Activated T-helper 2 cell treated with anti-CD3 and anti-CD28 coated beads, Interferon-gamma antibody, Interleukin-2, Interleukin-4, amounts not matched to agents 10 μg/mL and 5 μg/mL and 100 μg/mL, durations not matched to agents 14 hours and 24 hours and 36 hours (primary cell): ENCODE measurements at regions of chr2 and their contacts with region 1.

Region 1: GRCh38 chr2:55419679-55420438 is at the start of gene CCDC88A:
- DNase-seq: peak; percentile 86
- H3K4me3 Mint-ChIP-seq: peak within 1 kb of the TSS; percentile 91
- H3K27ac Mint-ChIP-seq: peak within 1 kb of the TSS; percentile 69
- H3K4me1 Mint-ChIP-seq: peaks cover 27% of the 10 kb centered on the region
- H3K27me3 Mint-ChIP-seq: peaks cover 29% of the 10 kb centered on the region
- total RNA-seq, gene CCDC88A: 19.0 and 19.8 TPM in 2 replicates

Region 2: GRCh38 chr2:54115284-54116137 is 1304.3 kb before region 1 on chr2 and contains the start of gene ACYP2:
- intact Hi-C with region 1: loop called (anchors 10 kb)
- DNase-seq: peak; percentile 88
- H3K4me3 Mint-ChIP-seq: peak within 1 kb of the TSS; percentile 89
- H3K27ac Mint-ChIP-seq: peak within 1 kb of the TSS; percentile 97
- H3K4me1 Mint-ChIP-seq: peaks cover 7% of the 10 kb centered on the region
- H3K27me3 Mint-ChIP-seq: peaks cover 8% of the 10 kb centered on the region
- total RNA-seq, gene ACYP2: 4.3 and 6.5 TPM in 2 replicates

Region 3: GRCh38 chr2:55050133-55050994 is 369.5 kb before region 1 on chr2 and contains the start of gene RTN4:
- intact Hi-C with region 1: loop called (anchors 5 kb)
- DNase-seq: peak; percentile 99
- H3K4me3 Mint-ChIP-seq: peak within 1 kb of the TSS; percentile 99
- H3K27ac Mint-ChIP-seq: peak within 1 kb of the TSS; percentile 99
- H3K4me1 Mint-ChIP-seq: peaks cover 61% of the 10 kb centered on the region
- H3K27me3 Mint-ChIP-seq: no peaks in the 10 kb centered on the region
- total RNA-seq, gene RTN4: 91.2 and 93.3 TPM in 2 replicates

Region 4: GRCh38 chr2:55268907-55269644 is 150.8 kb before region 1 on chr2 and contains the start of gene MTIF2:
- intact Hi-C with region 1: loop called (anchors 2 kb)
- DNase-seq: peak; percentile 82
- H3K4me3 Mint-ChIP-seq: peak within 1 kb of the TSS; percentile 97
- H3K27ac Mint-ChIP-seq: peak within 1 kb of the TSS; percentile 92
- H3K4me1 Mint-ChIP-seq: peaks cover 15% of the 10 kb centered on the region
- H3K27me3 Mint-ChIP-seq: no peaks in the 10 kb centered on the region
- total RNA-seq, gene MTIF2: 40.2 and 42.7 TPM in 2 replicates

Region 5: GRCh38 chr2:55311444-55311870 is 108.4 kb before region 1 on chr2:
- intact Hi-C with region 1: loop called (anchors 2 kb)
- DNase-seq: no peak
- H3K4me3 Mint-ChIP-seq: no peak overlapping the region
- H3K27ac Mint-ChIP-seq: peak overlapping the region; percentile 43
- H3K4me1 Mint-ChIP-seq: peaks cover 22% of the 10 kb centered on the region
- H3K27me3 Mint-ChIP-seq: no peaks in the 10 kb centered on the region